ENCODE measurements at regions of chr6 and their contacts with region 1.

Region 1: DNA sequence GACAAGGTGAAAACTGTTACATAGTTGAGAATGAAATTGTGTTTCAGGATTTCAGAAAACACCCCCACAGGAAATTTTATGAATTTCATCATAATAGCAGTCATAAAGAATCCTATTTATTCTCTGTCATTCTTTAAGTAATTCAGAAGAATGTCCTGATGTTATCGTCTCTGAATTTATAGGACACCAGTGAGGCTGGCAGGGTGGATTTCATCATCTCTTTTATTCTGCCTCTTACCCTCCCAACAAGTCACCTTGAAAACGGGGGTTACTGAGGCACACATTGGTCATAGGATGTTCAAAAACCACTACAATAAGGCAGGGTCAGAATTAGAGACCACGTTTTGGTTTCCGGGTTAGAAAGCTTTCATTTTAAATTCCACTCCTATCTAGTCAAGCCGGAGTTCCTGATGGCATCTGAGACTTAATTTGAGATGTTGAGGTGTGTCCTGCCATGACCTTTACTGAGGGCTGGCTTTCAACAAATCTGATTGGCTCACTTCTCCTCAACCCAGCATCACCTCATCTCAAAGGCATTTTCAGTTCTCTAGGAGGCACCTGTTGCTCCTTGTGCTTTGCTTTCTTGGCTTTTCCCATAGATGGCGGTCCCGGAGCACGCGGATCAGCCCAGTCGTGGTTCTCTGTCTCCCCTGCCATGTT is 230.6 kb upstream of the SUPT3H start:
- DNase-seq: peak; percentile 93
- ATAC-seq: peak; percentile 61
- H3K4me3 ChIP-seq: peak overlapping the region; percentile 44; the same call in 1 of the 2 replicates
- H3K27ac ChIP-seq: peak overlapping the region; percentile 99
- H3K4me1 ChIP-seq: peaks cover 42% of the 10 kb centered on the region
- H3K27me3 ChIP-seq: no peaks in the 10 kb centered on the region
- CTCF ChIP-seq: 0 out of 2 replicates have a peak, but pooled peaks have one; percentile 23

Region 2: GRCh38 chr6:45377554-45378333 is 230.6 kb before region 1 on chr6 and contains the start of gene SUPT3H:
- CTCF ChIA-PET with region 1: no interaction called
- POLR2A ChIA-PET with region 1: no interaction called
- intact Hi-C with region 1: loop called (anchors 1 kb)
- DNase-seq: peak; percentile 97
- ATAC-seq: peak; percentile 94
- H3K4me3 ChIP-seq: peak within 1 kb of the TSS; percentile 92
- H3K27ac ChIP-seq: peak within 1 kb of the TSS; percentile 90
- H3K4me1 ChIP-seq: peaks cover 19% of the 10 kb centered on the region
- H3K27me3 ChIP-seq: no peaks in the 10 kb centered on the region
- CTCF ChIP-seq: peak; percentile 31
- total RNA-seq, gene SUPT3H: 3.6 and 4.0 TPM in 2 replicates

Region 3: GRCh38 chr6:45445749-45446549 is 162.4 kb before region 1 on chr6:
- CTCF ChIA-PET with region 1: no interaction called
- POLR2A ChIA-PET with region 1: no interaction called
- intact Hi-C with region 1: loop called (anchors 5 kb)
- DNase-seq: peak; percentile 99
- ATAC-seq: peak; percentile 92
- H3K4me3 ChIP-seq: peak overlapping the region; percentile 37
- H3K27ac ChIP-seq: peak overlapping the region; percentile 90
- H3K4me1 ChIP-seq: peaks cover 41% of the 10 kb centered on the region
- H3K27me3 ChIP-seq: no peaks in the 10 kb centered on the region
- CTCF ChIP-seq: no peak

Region 4: GRCh38 chr6:45504947-45505346 is 103.4 kb before region 1 on chr6:
- CTCF ChIA-PET with region 1: no interaction called
- POLR2A ChIA-PET with region 1: no interaction called
- intact Hi-C with region 1: loop called (anchors 10 kb)
- DNase-seq: peak; percentile 63
- ATAC-seq: peak; percentile 77
- H3K4me3 ChIP-seq: no peak overlapping the region; the same call in 1 of the 2 replicates
- H3K27ac ChIP-seq: peak overlapping the region; percentile 94
- H3K4me1 ChIP-seq: peaks cover 41% of the 10 kb centered on the region
- H3K27me3 ChIP-seq: no peaks in the 10 kb centered on the region
- CTCF ChIP-seq: no peak

Region 5: GRCh38 chr6:45522486-45522885 is 85.9 kb before region 1 on chr6:
- CTCF ChIA-PET with region 1: no interaction called
- POLR2A ChIA-PET with region 1: no interaction called
- intact Hi-C with region 1: no loop called
- DNase-seq: no peak
- ATAC-seq: no peak
- H3K4me3 ChIP-seq: no peak overlapping the region
- H3K27ac ChIP-seq: no peak overlapping the region
- H3K4me1 ChIP-seq: no peaks in the 10 kb centered on the region
- H3K27me3 ChIP-seq: no peaks in the 10 kb centered on the region
- CTCF ChIP-seq: no peak

Region 6: GRCh38 chr6:45555981-45556771 is 52.2 kb before region 1 on chr6:
- CTCF ChIA-PET with region 1: no interaction called
- POLR2A ChIA-PET with region 1: no interaction called
- intact Hi-C with region 1: loop called (anchors 5 kb)
- DNase-seq: peak; percentile 36
- ATAC-seq: peak; percentile 79
- H3K4me3 ChIP-seq: peak overlapping the region; percentile 62
- H3K27ac ChIP-seq: peak overlapping the region; percentile 23
- H3K4me1 ChIP-seq: peaks cover 28% of the 10 kb centered on the region
- H3K27me3 ChIP-seq: no peaks in the 10 kb centered on the region
- CTCF ChIP-seq: no peak

Region 7: DNA sequence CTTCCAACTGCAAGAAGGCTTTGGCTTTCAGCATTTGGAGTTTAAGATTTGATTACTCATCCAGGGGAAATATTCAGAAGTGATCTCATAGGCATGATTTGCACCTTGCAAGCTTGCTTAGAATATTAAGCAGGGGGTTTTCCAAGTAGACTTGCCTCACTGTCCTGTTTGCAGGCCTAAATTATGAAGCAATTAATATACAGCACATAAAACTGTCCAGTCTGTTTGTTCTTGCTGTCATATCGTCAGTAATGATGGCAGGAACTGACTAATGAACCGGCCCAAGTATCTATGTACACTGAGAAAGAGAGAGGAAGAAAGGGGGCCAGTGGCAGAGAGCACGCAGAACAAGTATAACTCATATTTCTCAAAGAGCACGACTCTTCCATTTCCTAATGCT is 18.2 kb before region 1 on chr6:
- CTCF ChIA-PET with region 1: no interaction called
- POLR2A ChIA-PET with region 1: interaction called, 9 read pairs
- intact Hi-C with region 1: loop called (anchors 1 kb)
- DNase-seq: peak; percentile 93
- ATAC-seq: peak; percentile 93
- H3K4me3 ChIP-seq: no peak overlapping the region
- H3K27ac ChIP-seq: peak overlapping the region; percentile 97
- H3K4me1 ChIP-seq: peaks cover 68% of the 10 kb centered on the region
- H3K27me3 ChIP-seq: no peaks in the 10 kb centered on the region
- CTCF ChIP-seq: no peak

Region 8: GRCh38 chr6:45655630-45656422 is 47.4 kb after region 1 on chr6:
- CTCF ChIA-PET with region 1: interaction called, 5 read pairs
- POLR2A ChIA-PET with region 1: no interaction called
- intact Hi-C with region 1: loop called (anchors 2 kb)
- DNase-seq: peak; percentile 98
- ATAC-seq: peak; percentile 91
- H3K4me3 ChIP-seq: peak overlapping the region; percentile 3; the same call in 1 of the 2 replicates
- H3K27ac ChIP-seq: peak overlapping the region; percentile 98
- H3K4me1 ChIP-seq: peaks cover 72% of the 10 kb centered on the region
- H3K27me3 ChIP-seq: no peaks in the 10 kb centered on the region
- CTCF ChIP-seq: no peak